ENCODE measurements at regions of chr18 and their contacts with region 1.

Region 1: DNA sequence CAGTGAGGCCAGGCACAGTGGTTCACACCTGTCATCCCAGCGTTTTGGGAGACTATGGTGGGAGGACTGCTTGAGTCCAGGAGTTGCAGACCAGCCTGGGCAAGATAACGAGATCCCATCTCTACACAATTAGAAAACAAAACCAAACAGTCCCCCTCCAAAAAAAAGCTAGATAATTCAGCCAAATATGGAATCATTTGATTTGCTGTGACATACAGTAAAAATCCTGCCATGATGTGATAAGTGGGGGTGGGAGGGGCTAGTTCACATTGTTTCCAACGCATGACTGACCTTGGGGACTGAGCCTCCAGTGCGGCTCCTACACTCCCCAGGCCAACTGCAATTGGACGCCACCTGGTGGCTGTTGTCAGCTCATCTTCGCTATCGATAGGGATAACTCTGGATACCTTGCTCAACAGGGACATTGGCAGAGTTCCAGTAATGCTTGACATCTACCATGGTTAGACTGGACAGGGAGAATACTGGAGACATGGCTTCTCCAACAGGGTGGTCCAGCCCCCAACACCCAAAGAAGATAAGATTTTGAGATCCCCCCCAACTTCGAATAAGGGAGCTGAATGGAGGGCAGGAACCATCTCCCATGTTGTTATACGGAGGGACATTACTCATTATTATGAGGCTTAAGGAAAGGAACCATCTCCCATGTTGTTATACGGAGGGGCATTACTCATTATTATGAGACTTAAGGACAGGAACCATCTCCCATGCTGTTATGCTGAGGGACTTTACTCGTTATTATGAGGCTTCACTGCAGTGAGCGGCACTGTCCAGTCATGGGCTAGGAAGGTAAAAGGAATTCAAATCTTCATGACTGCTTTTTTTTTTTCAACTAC is 135.9 kb downstream of the TGIF1 start:
- DNase-seq: peak; percentile 55 to 69 (median 60)
- H3K4me3 ChIP-seq: no peak overlapping the region
- H3K4me3 Mint-ChIP-seq: peak overlapping the region in 4 of 8 donors; percentile 14 to 39 (median 30)
- H3K27ac ChIP-seq: no peak overlapping the region
- H3K27ac Mint-ChIP-seq: peak overlapping the region in 6 of 7 donors; percentile 64 to 86 (median 76)
- H3K4me1 ChIP-seq: peaks cover 13% of the 10 kb centered on the region
- H3K4me1 Mint-ChIP-seq: peaks cover 7 to 19% (median 12%) of the 10 kb centered on the region in 4 donors
- H3K27me3 ChIP-seq: no peaks in the 10 kb centered on the region
- H3K27me3 Mint-ChIP-seq: no peaks in the 10 kb centered on the region

Region 2: DNA sequence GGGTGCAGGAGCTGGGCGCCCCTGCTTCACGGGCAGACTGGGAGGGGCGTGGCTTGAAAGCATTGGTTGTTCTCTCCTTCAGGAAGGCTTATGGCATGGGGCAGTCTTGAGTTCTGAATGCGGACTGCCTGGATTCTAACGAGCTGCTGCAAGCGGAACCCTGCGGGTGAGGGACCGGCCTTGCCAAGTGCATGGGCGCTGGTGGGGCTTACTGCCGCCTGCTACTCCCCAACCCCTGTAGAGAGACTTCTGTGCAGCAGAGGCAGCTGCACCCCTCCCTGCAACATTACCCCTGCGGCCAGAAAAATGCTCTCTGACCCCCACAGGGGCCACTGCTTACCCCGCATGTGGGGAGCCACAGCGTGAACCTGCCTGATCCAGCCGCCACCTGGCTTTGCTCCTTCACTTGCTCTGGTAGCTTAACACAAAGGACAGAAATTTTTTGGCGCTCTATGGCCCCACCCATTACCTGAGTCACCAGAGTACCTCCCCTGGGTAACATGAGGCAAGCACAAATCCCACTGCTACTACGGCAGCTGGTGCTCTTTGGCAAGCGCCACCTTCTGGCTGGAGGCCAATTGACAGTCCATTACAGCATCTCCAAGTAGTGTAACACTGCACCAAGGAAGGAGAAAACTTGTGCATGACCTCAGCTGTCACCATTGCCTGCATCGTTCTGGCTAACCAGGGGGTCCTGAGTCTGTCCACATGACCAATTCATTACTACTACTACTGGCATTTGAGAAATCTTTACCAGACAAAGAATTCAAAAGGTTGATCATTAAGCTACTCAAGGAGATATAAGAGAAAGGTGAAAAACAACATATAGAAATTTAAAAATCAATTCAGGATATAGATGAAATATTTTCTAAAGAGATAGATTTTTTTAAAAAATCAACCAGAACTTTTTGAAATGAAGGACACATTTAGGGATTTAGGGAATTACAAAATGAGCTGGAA is 288.6 kb before region 1 on chr18:
- CTCF ChIA-PET with region 1: interaction called, 18 read pairs
- POLR2A ChIA-PET with region 1: no interaction called
- intact Hi-C with region 1: no loop called
- DNase-seq: peak; percentile 88 to 95 (median 90)
- H3K4me3 ChIP-seq: peak overlapping the region; percentile 71 to 86
- H3K4me3 Mint-ChIP-seq: peak overlapping the region; percentile 91 to 98 (median 94)
- H3K27ac ChIP-seq: peak overlapping the region; percentile 44
- H3K27ac Mint-ChIP-seq: peak overlapping the region; percentile 51 to 96 (median 90)
- H3K4me1 ChIP-seq: peaks cover 9% of the 10 kb centered on the region
- H3K4me1 Mint-ChIP-seq: peaks cover 2 to 15% (median 10%) of the 10 kb centered on the region in 4 donors
- H3K27me3 ChIP-seq: no peaks in the 10 kb centered on the region
- H3K27me3 Mint-ChIP-seq: peaks cover 8 to 13% of the 10 kb centered on the region in 2 donors

Region 3: DNA sequence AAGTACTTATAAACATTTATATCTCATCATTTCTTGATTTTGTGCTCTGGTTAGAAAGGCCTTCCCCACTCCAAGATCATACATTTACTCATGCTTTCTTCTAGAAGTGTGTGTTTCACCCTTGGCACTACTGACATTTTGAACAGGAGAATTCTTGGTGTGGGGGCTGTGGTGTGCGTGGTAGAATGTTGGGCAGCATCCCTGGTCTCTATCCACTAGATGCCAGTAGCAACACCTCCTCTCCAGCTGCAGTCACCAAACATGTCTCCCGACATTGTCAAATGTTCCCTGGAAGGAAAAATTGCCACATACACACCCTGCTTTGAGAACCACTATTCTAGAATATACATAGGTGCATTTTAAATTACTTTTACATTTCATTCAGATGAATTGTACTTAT is 144.6 kb before region 1 on chr18:
- CTCF ChIA-PET with region 1: interaction called, 25 read pairs
- POLR2A ChIA-PET with region 1: interaction called, 164 read pairs
- intact Hi-C with region 1: no loop called
- DNase-seq: peak in 3 of 5 donors; percentile 20 to 30 (median 21)
- H3K4me3 ChIP-seq: no peak overlapping the region
- H3K4me3 Mint-ChIP-seq: no peak overlapping the region
- H3K27ac ChIP-seq: no peak overlapping the region
- H3K27ac Mint-ChIP-seq: no peak overlapping the region
- H3K4me1 ChIP-seq: no peaks in the 10 kb centered on the region
- H3K4me1 Mint-ChIP-seq: no peaks in the 10 kb centered on the region
- H3K27me3 ChIP-seq: no peaks in the 10 kb centered on the region
- H3K27me3 Mint-ChIP-seq: peaks cover 0 to 2% of the 10 kb centered on the region in 2 donors

Region 4: GRCh38 chr18:3604498-3605408 is 18.9 kb after region 1 on chr18:
- CTCF ChIA-PET with region 1: interaction called, 15 read pairs
- POLR2A ChIA-PET with region 1: interaction called, 6 read pairs
- intact Hi-C with region 1: no loop called
- DNase-seq: peak; percentile 43 to 63 (median 56)
- H3K4me3 ChIP-seq: peak overlapping the region; percentile 44 to 54
- H3K4me3 Mint-ChIP-seq: no peak overlapping the region
- H3K27ac ChIP-seq: peak overlapping the region; percentile 67
- H3K27ac Mint-ChIP-seq: no peak overlapping the region
- H3K4me1 ChIP-seq: peaks cover 58% of the 10 kb centered on the region
- H3K4me1 Mint-ChIP-seq: peaks cover 8 to 15% (median 11%) of the 10 kb centered on the region in 4 donors
- H3K27me3 ChIP-seq: no peaks in the 10 kb centered on the region
- H3K27me3 Mint-ChIP-seq: no peaks in the 10 kb centered on the region

Region 5: GRCh38 chr18:3675446-3675845 is 89.6 kb after region 1 on chr18:
- CTCF ChIA-PET with region 1: no interaction called
- POLR2A ChIA-PET with region 1: no interaction called
- intact Hi-C with region 1: no loop called
- DNase-seq: no peak
- H3K4me3 ChIP-seq: no peak overlapping the region
- H3K4me3 Mint-ChIP-seq: no peak overlapping the region
- H3K27ac ChIP-seq: no peak overlapping the region
- H3K27ac Mint-ChIP-seq: no peak overlapping the region
- H3K4me1 ChIP-seq: no peaks in the 10 kb centered on the region
- H3K4me1 Mint-ChIP-seq: no peaks in the 10 kb centered on the region
- H3K27me3 ChIP-seq: no peaks in the 10 kb centered on the region
- H3K27me3 Mint-ChIP-seq: peaks cover 8 to 18% of the 10 kb centered on the region in 2 donors

Region 6: DNA sequence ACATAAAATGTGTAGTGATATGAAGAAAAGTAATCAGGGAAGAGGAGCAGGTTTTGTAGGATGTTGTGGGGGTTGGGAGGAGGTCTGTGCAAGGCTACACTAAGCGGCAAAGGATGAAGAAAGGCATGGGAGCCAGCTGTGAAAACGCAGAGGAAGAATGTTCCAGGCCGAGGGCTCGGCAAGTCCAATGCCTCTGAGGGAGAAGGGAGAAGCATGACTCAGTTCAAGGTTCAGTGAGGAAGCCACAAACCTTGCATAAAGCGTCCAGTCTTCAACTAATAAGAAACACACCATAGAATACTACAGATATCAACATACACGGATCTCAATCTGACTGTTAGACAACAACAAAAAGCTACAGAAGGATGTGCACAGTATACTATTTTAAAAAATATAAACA is 1941.7 kb after region 1 on chr18:
- CTCF ChIA-PET with region 1: no interaction called
- POLR2A ChIA-PET with region 1: no interaction called
- intact Hi-C with region 1: no loop called
- DNase-seq: no peak
- H3K4me3 ChIP-seq: no peak overlapping the region
- H3K4me3 Mint-ChIP-seq: no peak overlapping the region
- H3K27ac ChIP-seq: no peak overlapping the region
- H3K27ac Mint-ChIP-seq: no peak overlapping the region
- H3K4me1 ChIP-seq: no peaks in the 10 kb centered on the region
- H3K4me1 Mint-ChIP-seq: no peaks in the 10 kb centered on the region
- H3K27me3 ChIP-seq: no peaks in the 10 kb centered on the region
- H3K27me3 Mint-ChIP-seq: peaks cover 0 to 12% of the 10 kb centered on the region in 2 donors

Measured in CD4-positive, alpha-beta memory T cell (primary cell).